Activated CD4-positive, alpha-beta memory T cell treated with anti-CD3 and anti-CD28 coated beads for 36 hours (primary cell): ENCODE measurements at regions of chr18 and their contacts with region 1.

Region 1: GRCh38 chr18:50819728-50820378 is at the start of gene MRO:
- DNase-seq: peak; percentile 85
- H3K4me3 Mint-ChIP-seq: no peak within 1 kb of the TSS
- H3K27ac Mint-ChIP-seq: no peak within 1 kb of the TSS
- H3K4me1 Mint-ChIP-seq: no peaks in the 10 kb centered on the region
- H3K27me3 Mint-ChIP-seq: no peaks in the 10 kb centered on the region
- total RNA-seq, gene MRO: not detected

Region 2: GRCh38 chr18:50610349-50610748 is 209.5 kb before region 1 on chr18:
- CTCF ChIA-PET with region 1: no interaction called
- POLR2A ChIA-PET with region 1: no interaction called
- intact Hi-C with region 1: no loop called
- DNase-seq: no peak
- H3K4me3 Mint-ChIP-seq: no peak overlapping the region
- H3K27ac Mint-ChIP-seq: no peak overlapping the region
- H3K4me1 Mint-ChIP-seq: no peaks in the 10 kb centered on the region
- H3K27me3 Mint-ChIP-seq: peaks cover 2% of the 10 kb centered on the region

Region 3: GRCh38 chr18:50726960-50727589 is 92.8 kb before region 1 on chr18:
- CTCF ChIA-PET with region 1: no interaction called
- POLR2A ChIA-PET with region 1: no interaction called
- intact Hi-C with region 1: no loop called
- DNase-seq: no peak
- H3K4me3 Mint-ChIP-seq: no peak overlapping the region
- H3K27ac Mint-ChIP-seq: no peak overlapping the region
- H3K4me1 Mint-ChIP-seq: no peaks in the 10 kb centered on the region
- H3K27me3 Mint-ChIP-seq: peaks cover 2% of the 10 kb centered on the region

Region 4: DNA sequence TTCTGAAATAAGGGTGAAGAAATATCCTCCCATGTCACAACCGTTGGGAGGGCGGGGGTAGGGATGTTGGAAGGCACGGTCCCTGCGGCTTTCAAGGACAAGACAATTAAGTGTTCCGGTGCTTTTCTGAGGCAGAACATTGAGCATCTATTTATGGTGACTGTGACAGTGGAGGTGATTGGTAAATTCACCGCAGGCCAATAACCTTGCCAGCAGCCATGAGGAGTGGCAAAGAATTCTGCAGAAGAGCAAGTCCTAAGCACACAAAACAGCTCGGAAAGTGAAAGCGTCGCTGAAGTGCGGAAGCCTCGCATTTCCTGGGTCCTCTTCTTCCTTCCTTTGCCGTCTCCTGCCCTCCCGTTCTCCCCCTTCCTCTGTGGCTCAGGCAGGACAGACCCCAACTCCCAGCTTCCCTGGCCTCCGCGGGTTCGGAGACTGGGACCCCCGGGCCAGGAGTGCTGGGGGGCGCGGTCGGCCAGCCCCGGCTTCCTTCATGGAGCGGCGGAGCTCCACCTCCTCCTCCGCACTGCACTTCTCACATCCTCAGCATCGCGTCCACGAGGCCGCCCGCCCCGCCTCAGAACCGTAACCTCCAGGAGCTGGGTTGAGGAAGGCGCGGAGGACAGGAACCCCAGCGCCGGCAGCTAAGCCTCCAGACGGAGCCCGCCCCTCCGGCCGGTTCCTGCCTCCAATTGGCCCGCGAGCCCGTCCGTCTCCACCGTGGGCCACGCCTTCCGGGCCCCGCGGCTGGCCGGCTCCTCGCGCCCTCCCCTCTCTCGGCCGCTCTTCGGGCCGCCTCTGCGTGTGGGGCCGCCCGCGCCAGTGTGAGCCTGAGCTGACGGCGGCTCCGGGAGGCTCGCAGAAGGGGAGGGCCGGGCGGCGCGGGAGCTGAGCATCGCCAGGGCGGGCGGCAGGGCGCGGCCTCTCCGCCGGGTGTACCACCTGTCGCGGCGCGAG is 58.8 kb after region 1 on chr18 and contains the start of gene ME2:
- CTCF ChIA-PET with region 1: interaction called, 6 read pairs
- POLR2A ChIA-PET with region 1: interaction called, 5 read pairs
- intact Hi-C with region 1: loop called (anchors 5 kb)
- DNase-seq: peak; percentile 93
- H3K4me3 Mint-ChIP-seq: peak within 1 kb of the TSS; percentile 96
- H3K27ac Mint-ChIP-seq: peak within 1 kb of the TSS; percentile 97
- H3K4me1 Mint-ChIP-seq: peaks cover 21% of the 10 kb centered on the region
- H3K27me3 Mint-ChIP-seq: peaks cover under 1% of the 10 kb centered on the region
- total RNA-seq, gene ME2: 111 to 115 TPM

Region 5: DNA sequence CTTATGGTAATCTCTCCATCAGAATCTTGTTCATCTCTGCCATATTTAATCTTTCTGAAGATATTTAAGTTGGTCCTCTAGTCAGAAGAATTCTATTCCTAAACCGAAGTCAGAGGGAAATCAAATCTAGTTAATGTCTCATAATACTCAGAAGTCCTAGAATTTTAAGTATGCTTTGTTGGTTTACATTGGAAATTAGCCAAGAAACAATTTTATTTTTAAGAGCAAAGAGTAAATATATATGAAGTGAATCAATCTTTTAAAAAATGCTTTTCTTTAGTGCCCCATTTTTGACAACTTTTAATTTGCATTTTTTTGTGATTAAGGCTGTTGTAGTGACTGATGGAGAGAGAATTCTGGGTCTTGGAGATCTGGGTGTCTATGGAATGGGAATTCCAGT is 97.2 kb after region 1 on chr18:
- CTCF ChIA-PET with region 1: interaction called, 3 read pairs
- POLR2A ChIA-PET with region 1: no interaction called
- intact Hi-C with region 1: loop called (anchors 5 kb)
- DNase-seq: no peak
- H3K4me3 Mint-ChIP-seq: no peak overlapping the region
- H3K27ac Mint-ChIP-seq: peak overlapping the region; percentile 19
- H3K4me1 Mint-ChIP-seq: peaks cover 17% of the 10 kb centered on the region
- H3K27me3 Mint-ChIP-seq: no peaks in the 10 kb centered on the region

Region 6: DNA sequence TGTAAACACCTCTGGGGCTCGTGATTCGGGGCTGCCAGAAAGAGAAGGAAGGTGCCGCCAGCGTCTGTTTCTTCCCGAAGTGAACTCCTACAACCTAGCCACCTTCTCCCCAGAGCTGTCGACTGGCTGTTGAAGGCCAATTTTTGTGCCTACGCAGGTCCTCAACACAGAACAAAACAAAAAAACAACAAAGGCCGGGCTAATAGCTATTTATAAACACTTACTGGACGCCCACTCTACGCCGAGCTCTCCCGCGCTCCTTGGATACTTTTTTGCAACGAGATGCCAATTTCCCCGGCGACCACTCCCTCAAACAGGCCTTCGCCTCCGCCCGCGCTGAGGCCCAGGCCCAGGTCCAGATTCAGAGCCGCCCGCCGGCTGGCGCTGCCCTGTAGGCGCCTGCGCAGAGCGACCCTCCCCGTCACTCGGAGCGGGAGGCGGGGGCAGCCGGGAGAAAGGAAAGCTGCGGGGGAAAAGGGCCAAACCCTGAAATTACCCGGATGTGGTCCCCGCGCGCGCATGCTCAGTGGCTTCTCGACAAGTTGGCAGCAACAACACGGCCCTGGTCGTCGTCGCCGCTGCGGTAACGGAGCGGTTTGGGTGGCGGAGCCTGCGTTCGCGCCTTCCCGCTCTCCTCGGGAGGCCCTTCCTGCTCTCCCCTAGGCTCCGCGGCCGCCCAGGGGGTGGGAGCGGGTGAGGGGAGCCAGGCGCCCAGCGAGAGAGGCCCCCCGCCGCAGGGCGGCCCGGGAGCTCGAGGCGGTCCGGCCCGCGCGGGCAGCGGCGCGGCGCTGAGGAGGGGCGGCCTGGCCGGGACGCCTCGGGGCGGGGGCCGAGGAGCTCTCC is 210.1 kb after region 1 on chr18 and contains the start of gene SMAD4:
- CTCF ChIA-PET with region 1: interaction called, 17 read pairs
- POLR2A ChIA-PET with region 1: no interaction called
- intact Hi-C with region 1: no loop called
- DNase-seq: peak; percentile 99
- H3K4me3 Mint-ChIP-seq: peak within 1 kb of the TSS; percentile 99
- H3K27ac Mint-ChIP-seq: peak within 1 kb of the TSS; percentile 91
- H3K4me1 Mint-ChIP-seq: peaks cover 58% of the 10 kb centered on the region
- H3K27me3 Mint-ChIP-seq: no peaks in the 10 kb centered on the region
- total RNA-seq, gene SMAD4: 72.5 to 72.7 TPM

Region 7: GRCh38 chr18:51082571-51083267 is 262.9 kb after region 1 on chr18:
- CTCF ChIA-PET with region 1: no interaction called
- POLR2A ChIA-PET with region 1: no interaction called
- intact Hi-C with region 1: no loop called
- DNase-seq: no peak
- H3K4me3 Mint-ChIP-seq: no peak overlapping the region
- H3K27ac Mint-ChIP-seq: peak overlapping the region; percentile 51
- H3K4me1 Mint-ChIP-seq: peaks cover 15% of the 10 kb centered on the region
- H3K27me3 Mint-ChIP-seq: no peaks in the 10 kb centered on the region

Region 8: DNA sequence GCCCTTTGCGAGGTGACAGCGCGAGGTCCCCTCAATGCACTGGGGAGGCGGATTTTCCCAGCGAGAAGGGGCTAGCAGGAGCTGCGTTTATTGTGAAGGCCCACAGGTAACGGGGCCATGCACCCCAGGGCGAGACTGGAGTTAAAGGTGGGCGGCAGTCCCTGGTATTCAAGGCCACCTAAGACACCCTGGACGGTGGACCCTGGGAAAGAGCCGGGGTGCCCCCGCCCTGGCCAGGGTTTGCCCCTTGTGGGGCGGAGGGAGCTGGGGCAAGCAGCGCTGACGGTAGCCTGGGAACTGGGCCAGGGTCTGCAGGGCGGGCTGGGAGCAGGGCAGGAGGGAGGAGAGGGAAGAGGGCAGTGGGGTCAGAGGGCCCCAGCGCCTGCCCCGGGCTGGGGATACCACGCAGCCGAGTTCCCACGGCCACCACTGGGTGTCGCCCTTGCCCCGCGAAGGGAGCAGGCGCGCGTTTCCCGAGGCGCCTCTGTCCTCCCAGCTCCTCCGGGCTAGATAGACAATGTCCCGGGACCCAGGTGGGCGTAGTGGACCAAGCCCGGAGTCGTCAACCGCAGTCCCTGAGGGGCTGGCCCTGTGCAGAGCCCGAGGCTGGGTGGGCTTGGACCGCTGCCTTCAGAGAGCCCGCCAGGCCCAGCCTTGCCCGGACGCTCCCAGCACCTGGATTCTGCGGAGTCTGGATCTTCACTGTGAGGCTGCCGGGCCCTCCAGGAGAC is 290.4 kb after region 1 on chr18:
- CTCF ChIA-PET with region 1: interaction called, 10 read pairs
- POLR2A ChIA-PET with region 1: no interaction called
- intact Hi-C with region 1: no loop called
- DNase-seq: peak; percentile 79
- H3K4me3 Mint-ChIP-seq: no peak overlapping the region
- H3K27ac Mint-ChIP-seq: no peak overlapping the region
- H3K4me1 Mint-ChIP-seq: peaks cover 15% of the 10 kb centered on the region
- H3K27me3 Mint-ChIP-seq: no peaks in the 10 kb centered on the region